Naive thymus-derived CD8-positive, alpha-beta T cell (primary cell): ENCODE measurements at regions of chr22 and their contacts with region 1.

Region 1: GRCh38 chr22:40346178-40347118 is at the start of gene ADSL:
- DNase-seq: peak; percentile 68 to 88 (median 78)
- ATAC-seq: peak; percentile 82 to 84
- H3K4me3 Mint-ChIP-seq: peak within 1 kb of the TSS; percentile 91 to 99 (median 97)
- H3K27ac Mint-ChIP-seq: peak within 1 kb of the TSS; percentile 95 to 99 (median 98)
- H3K4me1 Mint-ChIP-seq: peaks cover 28 to 68% (median 50%) of the 10 kb centered on the region in 4 donors
- H3K27me3 Mint-ChIP-seq: no peaks in the 10 kb centered on the region
- polyA plus RNA-seq, gene ADSL: 97.0 to 130 (median 100.0) TPM

Region 2: GRCh38 chr22:40289991-40290459 is 56.4 kb before region 1 on chr22:
- POLR2A ChIA-PET with region 1: interaction called, 45 read pairs
- DNase-seq: peak; percentile 50 to 83 (median 68)
- ATAC-seq: peak; percentile 88 to 92
- H3K4me3 Mint-ChIP-seq: peak overlapping the region; percentile 36 to 81 (median 74)
- H3K27ac Mint-ChIP-seq: peak overlapping the region; percentile 92 to 99 (median 97)
- H3K4me1 Mint-ChIP-seq: peaks cover 27 to 64% (median 54%) of the 10 kb centered on the region in 4 donors
- H3K27me3 Mint-ChIP-seq: no peaks in the 10 kb centered on the region

Region 3: DNA sequence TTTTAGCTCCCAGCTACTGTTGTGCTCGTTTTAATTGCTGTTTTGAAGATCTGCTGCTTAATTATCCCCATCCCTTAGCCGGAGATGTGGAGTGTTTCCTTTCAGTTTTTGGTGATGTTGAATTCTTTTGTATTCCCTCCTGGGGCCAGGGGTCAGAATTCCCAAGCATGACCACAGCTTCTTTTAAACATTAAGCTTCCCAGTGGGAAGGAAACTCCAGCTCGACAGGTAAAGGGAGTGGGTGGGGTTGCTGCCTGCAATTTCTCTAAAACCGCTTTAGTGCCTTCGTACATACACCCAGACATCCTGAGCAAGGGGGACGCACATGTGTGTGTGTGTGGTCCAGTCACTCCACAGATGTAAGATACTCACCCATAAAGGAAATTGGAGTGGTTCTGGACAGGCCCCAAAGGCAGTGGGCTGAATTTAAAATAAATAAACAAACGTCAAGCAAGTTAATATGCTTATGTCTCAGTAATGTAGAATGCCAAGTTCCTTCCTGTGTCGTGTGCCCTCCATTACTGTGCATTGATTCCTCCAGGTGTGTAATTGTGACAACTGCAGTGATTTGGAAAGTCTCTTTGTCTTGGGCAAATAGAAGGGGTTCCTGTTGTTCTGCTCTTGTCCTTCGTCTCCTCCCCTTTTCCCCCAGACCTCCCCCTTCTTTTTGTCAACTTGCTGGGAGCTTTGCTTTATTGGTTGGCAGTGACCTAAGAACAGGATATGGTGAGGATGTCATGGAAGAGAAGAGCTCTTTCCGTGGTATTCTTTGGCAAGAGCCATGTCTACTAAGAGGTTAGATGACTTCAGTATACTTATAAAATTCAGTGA is 19.3 kb before region 1 on chr22:
- POLR2A ChIA-PET with region 1: interaction called, 189 read pairs
- DNase-seq: peak in 2 of 10 donors; percentile 60 to 61
- ATAC-seq: peak; percentile 8 to 10
- H3K4me3 Mint-ChIP-seq: peak overlapping the region in 9 of 10 donors; percentile 12 to 76 (median 67)
- H3K27ac Mint-ChIP-seq: peak overlapping the region; percentile 95 to 99 (median 98)
- H3K4me1 Mint-ChIP-seq: peaks cover 35 to 99% (median 95%) of the 10 kb centered on the region in 4 donors
- H3K27me3 Mint-ChIP-seq: no peaks in the 10 kb centered on the region

Region 4: GRCh38 chr22:40332319-40332781 is 14.1 kb before region 1 on chr22:
- POLR2A ChIA-PET with region 1: interaction called, 189 read pairs
- DNase-seq: peak in 2 of 10 donors; percentile 67 to 72
- ATAC-seq: peak; percentile 50 to 64
- H3K4me3 Mint-ChIP-seq: peak overlapping the region; percentile 44 to 92 (median 78)
- H3K27ac Mint-ChIP-seq: peak overlapping the region; percentile 80 to 99 (median 95)
- H3K4me1 Mint-ChIP-seq: peaks cover 48 to 94% (median 91%) of the 10 kb centered on the region in 4 donors
- H3K27me3 Mint-ChIP-seq: no peaks in the 10 kb centered on the region